ENCODE measurements at regions of chr19 and their contacts with region 1.

Region 1: DNA sequence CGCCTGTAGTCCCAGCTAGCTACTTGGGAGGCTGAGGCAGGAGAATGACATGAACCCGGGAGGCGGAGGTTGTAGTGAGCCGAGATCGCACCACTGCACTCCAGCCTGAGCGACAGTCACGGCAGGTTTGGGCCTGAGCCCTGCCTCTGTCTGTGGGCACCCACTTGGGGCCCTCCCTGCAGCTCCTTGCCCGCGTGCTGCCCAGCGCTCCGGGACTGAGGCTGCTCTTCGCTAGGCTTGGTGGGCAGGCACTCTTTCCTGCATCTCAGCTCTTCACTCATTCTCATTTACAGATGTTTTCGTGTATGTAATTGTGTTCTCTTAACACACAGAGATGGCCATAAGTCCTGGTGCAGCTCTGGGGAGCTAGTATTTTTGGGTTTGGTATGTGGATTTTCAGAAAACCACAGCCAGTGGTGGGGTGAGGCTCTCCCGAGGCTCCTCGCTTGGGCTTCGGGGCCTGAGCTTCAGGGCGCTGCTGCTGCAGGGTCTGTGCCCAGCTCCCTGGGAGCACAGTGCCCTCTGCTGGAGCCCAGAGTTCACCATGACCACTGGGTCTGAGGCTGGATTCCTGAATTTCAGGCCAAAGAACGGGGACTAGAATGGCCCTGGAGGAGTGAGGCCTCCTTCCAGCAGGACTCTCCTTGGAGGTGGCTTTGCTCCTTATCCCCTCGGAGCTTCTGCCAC is 15.2 kb downstream of the UPF1 start:
- DNase-seq: peak; percentile 89
- H3K4me3 Mint-ChIP-seq: no peak overlapping the region
- H3K27ac Mint-ChIP-seq: peak overlapping the region; percentile 69
- H3K4me1 Mint-ChIP-seq: peaks cover 48% of the 10 kb centered on the region
- H3K27me3 Mint-ChIP-seq: no peaks in the 10 kb centered on the region

Region 2: GRCh38 chr19:18469069-18469846 is 377.7 kb before region 1 on chr19:
- intact Hi-C with region 1: loop called (anchors 10 kb)
- DNase-seq: peak; percentile 87
- H3K4me3 Mint-ChIP-seq: no peak overlapping the region
- H3K27ac Mint-ChIP-seq: peak overlapping the region; percentile 37
- H3K4me1 Mint-ChIP-seq: peaks cover 18% of the 10 kb centered on the region
- H3K27me3 Mint-ChIP-seq: no peaks in the 10 kb centered on the region

Region 3: GRCh38 chr19:18940769-18941407 is 93.9 kb after region 1 on chr19 and contains the start of gene HOMER3:
- intact Hi-C with region 1: no loop called
- DNase-seq: peak; percentile 93
- H3K4me3 Mint-ChIP-seq: peak within 1 kb of the TSS; percentile 69
- H3K27ac Mint-ChIP-seq: no peak within 1 kb of the TSS
- H3K4me1 Mint-ChIP-seq: peaks cover 7% of the 10 kb centered on the region
- H3K27me3 Mint-ChIP-seq: peaks cover 37% of the 10 kb centered on the region
- total RNA-seq, gene HOMER3: 1.3 and 1.4 TPM in 2 replicates

Measured in activated CD4-positive, alpha-beta T cell treated with anti-CD3 and anti-CD28 coated beads, Interleukin-2, amount 10 ng/mL, durations not matched to agents 24 days and 14 days (primary cell).